ENCODE measurements at regions of chr9 and their contacts with region 1.

Region 1: DNA sequence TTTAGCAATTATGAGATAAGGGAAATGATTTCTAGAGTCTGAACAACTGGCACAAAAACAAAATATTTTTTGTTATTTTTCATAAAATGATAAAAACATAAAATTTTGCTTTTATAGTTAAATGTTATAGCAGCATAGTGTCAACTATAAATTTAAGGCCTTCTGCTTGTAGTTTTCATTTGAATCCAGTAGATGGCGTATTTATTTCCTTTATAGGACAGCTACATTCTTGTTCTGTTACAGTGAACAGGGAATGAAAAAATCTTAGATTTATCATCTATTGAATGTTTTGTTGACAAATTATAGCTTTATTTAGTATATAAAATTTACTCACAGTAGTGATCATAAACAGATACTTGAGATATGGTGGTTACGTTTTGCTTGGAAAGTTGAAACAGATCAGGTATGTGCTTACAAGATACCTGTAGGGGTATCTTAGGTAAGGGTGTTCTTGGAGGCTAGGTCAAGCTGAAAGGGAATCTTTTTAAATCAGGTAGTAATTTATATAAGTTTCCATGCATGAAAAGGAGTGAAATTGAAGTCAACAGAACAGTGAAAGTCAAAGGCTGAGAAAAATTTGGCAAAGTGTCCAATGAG is 239.3 kb upstream of the GRIN3A start:
- DNase-seq: no peak
- H3K4me3 Mint-ChIP-seq: no peak overlapping the region
- H3K27ac Mint-ChIP-seq: no peak overlapping the region
- H3K4me1 Mint-ChIP-seq: no peaks in the 10 kb centered on the region
- H3K27me3 Mint-ChIP-seq: no peaks in the 10 kb centered on the region

Region 2: GRCh38 chr9:101601904-101602765 is 375.6 kb before region 1 on chr9:
- CTCF ChIA-PET with region 1: no interaction called
- POLR2A ChIA-PET with region 1: no interaction called
- intact Hi-C with region 1: loop called (anchors 5 kb)
- DNase-seq: no peak
- H3K4me3 Mint-ChIP-seq: no peak overlapping the region
- H3K27ac Mint-ChIP-seq: no peak overlapping the region
- H3K4me1 Mint-ChIP-seq: no peaks in the 10 kb centered on the region
- H3K27me3 Mint-ChIP-seq: peaks cover 2% of the 10 kb centered on the region

Region 3: GRCh38 chr9:101738566-101739183 is 239.0 kb before region 1 on chr9 and contains the start of gene GRIN3A:
- CTCF ChIA-PET with region 1: no interaction called
- POLR2A ChIA-PET with region 1: no interaction called
- intact Hi-C with region 1: no loop called
- DNase-seq: no peak
- H3K4me3 Mint-ChIP-seq: no peak within 1 kb of the TSS
- H3K27ac Mint-ChIP-seq: no peak within 1 kb of the TSS
- H3K4me1 Mint-ChIP-seq: peaks cover 3% of the 10 kb centered on the region
- H3K27me3 Mint-ChIP-seq: peaks cover 43% of the 10 kb centered on the region
- total RNA-seq, gene GRIN3A: not detected